B cell (primary cell): ENCODE measurements at regions of chr1 and their contacts with region 1.

Region 1: DNA sequence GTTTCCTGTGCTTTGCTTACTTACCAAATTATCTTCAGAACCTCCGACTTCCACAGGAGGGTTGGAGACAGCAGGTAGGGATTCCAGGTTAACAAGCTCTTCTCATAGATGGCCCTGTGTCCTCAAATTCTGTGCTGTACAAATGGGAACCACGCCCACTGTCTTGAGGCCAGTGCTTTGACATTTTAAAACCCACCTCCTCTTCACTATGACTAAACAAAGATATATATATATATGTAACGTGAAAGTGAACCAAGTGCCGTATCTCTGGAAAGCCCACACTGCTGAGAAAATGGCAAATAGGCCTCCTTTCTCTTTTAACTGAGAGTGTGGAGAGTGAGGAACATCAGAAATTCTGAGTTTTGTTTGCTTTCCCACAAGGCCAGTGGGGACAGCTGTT is 99.6 kb downstream of the ZBTB18 start:
- DNase-seq: no peak
- ATAC-seq: no peak
- H3K4me3 ChIP-seq: no peak overlapping the region
- H3K4me3 Mint-ChIP-seq: no peak overlapping the region
- H3K27ac ChIP-seq: no peak overlapping the region
- H3K27ac Mint-ChIP-seq: no peak overlapping the region
- H3K4me1 ChIP-seq: no peaks in the 10 kb centered on the region
- H3K4me1 Mint-ChIP-seq: peaks cover 2% of the 10 kb centered on the region
- H3K27me3 ChIP-seq: no peaks in the 10 kb centered on the region
- H3K27me3 Mint-ChIP-seq: peaks cover 8% of the 10 kb centered on the region
- CTCF ChIP-seq: no peak

Region 2: GRCh38 chr1:244173769-244174168 is 23.1 kb after region 1 on chr1:
- CTCF ChIA-PET with region 1: no interaction called
- POLR2A ChIA-PET with region 1: no interaction called
- intact Hi-C with region 1: loop called (anchors 1 kb)
- DNase-seq: no peak
- ATAC-seq: no peak
- H3K4me3 ChIP-seq: no peak overlapping the region
- H3K4me3 Mint-ChIP-seq: no peak overlapping the region
- H3K27ac ChIP-seq: no peak overlapping the region
- H3K27ac Mint-ChIP-seq: no peak overlapping the region
- H3K4me1 ChIP-seq: no peaks in the 10 kb centered on the region
- H3K4me1 Mint-ChIP-seq: no peaks in the 10 kb centered on the region
- H3K27me3 ChIP-seq: no peaks in the 10 kb centered on the region
- H3K27me3 Mint-ChIP-seq: no peaks in the 10 kb centered on the region
- CTCF ChIP-seq: no peak